AG04450 (cell line): ENCODE measurements at regions of chr3 and their contacts with region 1.

Region 1: GRCh38 chr3:45656575-45657363 is 32.4 kb upstream of the SACM1L start:
- DNase-seq: peak; percentile 81
- H3K4me3 ChIP-seq: no peak overlapping the region
- H3K27ac ChIP-seq: no peak overlapping the region
- H3K27me3 ChIP-seq: no peaks in the 10 kb centered on the region
- CTCF ChIP-seq: peak; percentile 94

Region 2: DNA sequence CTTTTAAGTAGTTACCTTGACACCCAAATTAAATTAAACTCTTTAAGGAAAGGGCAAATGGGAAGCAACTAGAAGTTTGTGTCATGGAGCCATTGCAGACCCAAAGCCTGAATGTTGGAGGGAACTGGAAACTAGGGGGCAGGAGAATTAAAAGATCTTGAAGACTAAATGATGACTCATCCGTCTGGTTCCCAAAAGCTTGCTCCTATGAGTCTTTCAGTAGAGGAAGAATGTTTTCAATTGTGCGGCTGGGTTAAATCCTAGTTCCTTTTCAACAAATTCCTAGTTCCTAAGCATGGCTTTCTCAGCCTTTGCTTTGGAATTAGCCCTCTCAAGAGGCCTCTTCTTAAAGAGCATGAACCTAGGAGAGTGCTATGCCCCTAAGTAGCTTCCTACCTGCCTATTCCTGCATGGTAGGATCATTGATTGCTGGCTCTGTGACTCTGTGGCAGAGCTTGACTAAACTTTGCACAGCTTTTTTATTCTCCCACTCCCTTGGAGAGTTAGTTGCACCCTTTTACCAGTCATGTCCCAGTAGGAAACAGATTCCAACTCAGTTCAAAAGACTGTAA is 613.0 kb before region 1 on chr3:
- CTCF ChIA-PET with region 1: interaction called, 10 read pairs
- POLR2A ChIA-PET with region 1: no interaction called
- DNase-seq: peak; percentile 66
- H3K4me3 ChIP-seq: no peak overlapping the region
- H3K27ac ChIP-seq: peak overlapping the region; percentile 66
- H3K27me3 ChIP-seq: no peaks in the 10 kb centered on the region
- CTCF ChIP-seq: peak; percentile 52

Region 3: DNA sequence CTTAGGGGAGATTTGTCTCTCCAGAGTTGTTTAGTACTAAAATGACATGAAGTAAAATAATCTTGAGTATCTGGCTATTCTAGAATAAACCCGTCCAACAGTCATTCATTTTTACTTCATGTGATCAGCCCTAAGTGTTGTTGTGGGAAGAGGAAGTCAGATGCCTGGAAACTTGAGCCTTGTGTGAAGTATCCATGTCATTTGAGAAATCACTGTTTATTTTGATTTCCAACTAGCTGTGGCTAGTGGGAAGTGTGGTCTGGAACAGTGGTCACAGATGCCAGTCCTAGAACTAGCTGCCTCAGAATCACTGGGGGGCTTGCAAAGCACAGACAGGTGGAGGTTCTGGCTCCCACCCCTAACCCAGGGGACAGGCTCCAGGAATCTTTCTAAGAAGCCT is 139.9 kb before region 1 on chr3:
- CTCF ChIA-PET with region 1: interaction called, 217 read pairs
- POLR2A ChIA-PET with region 1: interaction called, 4 read pairs
- DNase-seq: peak; percentile 59
- H3K4me3 ChIP-seq: no peak overlapping the region
- H3K27ac ChIP-seq: peak overlapping the region; percentile 63
- H3K27me3 ChIP-seq: no peaks in the 10 kb centered on the region
- CTCF ChIP-seq: no peak

Region 4: GRCh38 chr3:45551214-45552010 is 105.4 kb before region 1 on chr3:
- CTCF ChIA-PET with region 1: interaction called, 17 read pairs
- POLR2A ChIA-PET with region 1: interaction called, 9 read pairs
- DNase-seq: peak; percentile 97
- H3K4me3 ChIP-seq: no peak overlapping the region
- H3K27ac ChIP-seq: peak overlapping the region; percentile 92
- H3K27me3 ChIP-seq: no peaks in the 10 kb centered on the region
- CTCF ChIP-seq: no peak

Region 5: DNA sequence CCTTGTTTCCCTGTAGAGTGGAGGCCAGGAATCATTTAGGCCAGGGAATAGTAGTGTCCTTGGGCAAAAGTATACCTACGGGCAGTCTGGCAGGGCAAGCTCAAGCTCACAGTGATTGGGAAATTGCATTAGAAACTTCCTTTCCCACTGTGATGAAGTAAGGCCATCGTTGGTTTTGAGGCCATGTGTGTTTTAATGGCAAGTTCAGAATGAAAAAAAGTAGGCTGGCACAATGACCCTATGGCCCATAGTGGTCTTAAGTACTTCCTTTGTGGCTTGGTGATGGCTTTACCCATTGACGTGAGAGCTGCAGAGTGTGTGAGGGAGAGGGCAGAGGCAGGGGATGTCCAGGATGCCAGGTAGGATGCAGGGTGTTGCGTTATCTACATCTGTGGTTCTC is 33.4 kb before region 1 on chr3:
- CTCF ChIA-PET with region 1: interaction called, 10 read pairs
- POLR2A ChIA-PET with region 1: interaction called, 6 read pairs
- DNase-seq: no peak
- H3K4me3 ChIP-seq: no peak overlapping the region
- H3K27ac ChIP-seq: no peak overlapping the region
- H3K27me3 ChIP-seq: no peaks in the 10 kb centered on the region
- CTCF ChIP-seq: no peak

Region 6: DNA sequence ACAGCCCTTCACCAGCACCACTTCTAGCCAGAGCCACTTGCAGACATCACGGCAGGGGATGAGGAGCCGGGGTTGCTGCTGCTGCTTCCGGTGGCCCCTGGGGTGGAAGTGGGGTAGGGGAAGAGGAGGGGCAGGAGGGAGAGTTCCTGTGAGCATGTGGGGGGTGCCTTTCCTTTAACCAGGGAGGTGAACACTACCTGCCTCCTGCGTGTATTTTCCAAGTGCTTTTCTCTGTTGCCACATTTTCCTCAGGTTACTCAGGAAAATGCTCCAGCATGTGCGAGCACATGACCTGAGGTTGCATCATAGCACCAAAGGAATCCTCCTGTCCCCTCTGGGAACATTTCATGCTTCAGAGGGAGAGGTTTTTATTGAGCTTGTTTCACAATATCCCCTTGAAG is 20.3 kb after region 1 on chr3:
- CTCF ChIA-PET with region 1: interaction called, 16 read pairs
- POLR2A ChIA-PET with region 1: no interaction called
- DNase-seq: no peak
- H3K4me3 ChIP-seq: no peak overlapping the region
- H3K27ac ChIP-seq: peak overlapping the region; percentile 31
- H3K27me3 ChIP-seq: no peaks in the 10 kb centered on the region
- CTCF ChIP-seq: no peak